Panc1 (cell line): ENCODE measurements at regions of chr14 and their contacts with region 1.

Region 1: DNA sequence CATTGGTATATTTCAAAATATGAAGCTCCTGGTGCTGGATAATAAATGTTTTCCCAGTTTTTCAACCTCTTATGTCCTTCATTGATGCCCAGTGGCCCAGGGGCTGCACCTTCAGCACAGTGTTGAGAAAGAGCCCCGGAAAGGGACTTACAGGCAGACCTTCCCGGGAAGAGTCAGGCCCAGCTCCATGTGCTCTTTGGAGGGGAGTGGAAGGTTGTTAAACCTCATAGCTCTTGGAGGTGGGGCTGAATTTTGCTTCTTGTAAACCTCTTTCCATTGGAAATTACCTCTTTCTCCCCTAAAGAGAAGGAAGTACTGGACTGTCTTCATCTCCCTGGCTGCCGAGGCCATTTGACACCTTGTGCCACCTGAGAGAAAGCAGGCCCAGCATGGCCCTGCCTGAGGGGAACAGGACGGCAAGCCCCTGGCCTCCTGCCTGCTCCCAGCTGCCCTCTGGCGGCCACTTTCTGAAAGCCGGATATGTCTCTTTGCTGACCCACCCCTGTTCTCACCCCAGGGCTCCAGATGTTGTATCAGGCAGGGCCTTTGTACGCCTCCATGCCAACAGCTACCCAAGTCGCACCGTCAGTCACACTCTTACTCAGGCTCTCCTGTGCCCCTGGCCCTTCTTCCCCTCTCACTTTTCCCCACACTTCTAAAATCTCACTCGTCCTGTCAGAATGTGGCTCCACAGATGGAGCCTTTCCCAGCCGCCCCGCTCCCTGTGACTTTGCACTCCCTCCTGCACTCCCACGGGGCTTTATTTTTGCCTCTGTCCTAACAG is 43.0 kb downstream of the EVL start:
- DNase-seq: peak; percentile 41
- ATAC-seq: peak; percentile 94
- H3K4me3 ChIP-seq: no peak overlapping the region
- H3K27ac ChIP-seq: no peak overlapping the region
- H3K4me1 ChIP-seq: no peaks in the 10 kb centered on the region; the same call in 1 of the 2 replicates
- H3K27me3 ChIP-seq: no peaks in the 10 kb centered on the region
- CTCF ChIP-seq: peak; percentile 90

Region 2: GRCh38 chr14:99982537-99983250 is 125.5 kb before region 1 on chr14:
- CTCF ChIA-PET with region 1: no interaction called
- POLR2A ChIA-PET with region 1: no interaction called
- in situ Hi-C with region 1: no loop called
- intact Hi-C with region 1: loop called (anchors 2 kb)
- DNase-seq: peak; percentile 52
- ATAC-seq: peak; percentile 83
- H3K4me3 ChIP-seq: no peak overlapping the region
- H3K27ac ChIP-seq: 0 out of 2 replicates have a peak overlapping the region, but pooled peaks have one; percentile 39
- H3K4me1 ChIP-seq: peaks cover 23% of the 10 kb centered on the region
- H3K27me3 ChIP-seq: no peaks in the 10 kb centered on the region
- CTCF ChIP-seq: peak; percentile 81

Region 3: GRCh38 chr14:100054316-100055075 is 53.7 kb before region 1 on chr14:
- CTCF ChIA-PET with region 1: no interaction called
- POLR2A ChIA-PET with region 1: no interaction called
- in situ Hi-C with region 1: no loop called
- intact Hi-C with region 1: loop called (anchors 2 kb)
- DNase-seq: no peak
- ATAC-seq: no peak
- H3K4me3 ChIP-seq: no peak overlapping the region
- H3K27ac ChIP-seq: no peak overlapping the region
- H3K4me1 ChIP-seq: 0 out of 2 replicates have a peak, but pooled peaks cover 4% of the 10 kb centered on the region
- H3K27me3 ChIP-seq: no peaks in the 10 kb centered on the region
- CTCF ChIP-seq: no peak

Region 4: GRCh38 chr14:100096570-100096971 is 11.7 kb before region 1 on chr14:
- CTCF ChIA-PET with region 1: interaction called, 14 read pairs
- POLR2A ChIA-PET with region 1: no interaction called
- in situ Hi-C with region 1: no loop called
- intact Hi-C with region 1: no loop called
- DNase-seq: no peak
- ATAC-seq: no peak
- H3K4me3 ChIP-seq: no peak overlapping the region
- H3K27ac ChIP-seq: no peak overlapping the region
- H3K4me1 ChIP-seq: no peaks in the 10 kb centered on the region
- H3K27me3 ChIP-seq: no peaks in the 10 kb centered on the region
- CTCF ChIP-seq: no peak